Mammary epithelial cell (primary cell): ENCODE measurements at regions of chr1 and their contacts with region 1.

Region 1: DNA sequence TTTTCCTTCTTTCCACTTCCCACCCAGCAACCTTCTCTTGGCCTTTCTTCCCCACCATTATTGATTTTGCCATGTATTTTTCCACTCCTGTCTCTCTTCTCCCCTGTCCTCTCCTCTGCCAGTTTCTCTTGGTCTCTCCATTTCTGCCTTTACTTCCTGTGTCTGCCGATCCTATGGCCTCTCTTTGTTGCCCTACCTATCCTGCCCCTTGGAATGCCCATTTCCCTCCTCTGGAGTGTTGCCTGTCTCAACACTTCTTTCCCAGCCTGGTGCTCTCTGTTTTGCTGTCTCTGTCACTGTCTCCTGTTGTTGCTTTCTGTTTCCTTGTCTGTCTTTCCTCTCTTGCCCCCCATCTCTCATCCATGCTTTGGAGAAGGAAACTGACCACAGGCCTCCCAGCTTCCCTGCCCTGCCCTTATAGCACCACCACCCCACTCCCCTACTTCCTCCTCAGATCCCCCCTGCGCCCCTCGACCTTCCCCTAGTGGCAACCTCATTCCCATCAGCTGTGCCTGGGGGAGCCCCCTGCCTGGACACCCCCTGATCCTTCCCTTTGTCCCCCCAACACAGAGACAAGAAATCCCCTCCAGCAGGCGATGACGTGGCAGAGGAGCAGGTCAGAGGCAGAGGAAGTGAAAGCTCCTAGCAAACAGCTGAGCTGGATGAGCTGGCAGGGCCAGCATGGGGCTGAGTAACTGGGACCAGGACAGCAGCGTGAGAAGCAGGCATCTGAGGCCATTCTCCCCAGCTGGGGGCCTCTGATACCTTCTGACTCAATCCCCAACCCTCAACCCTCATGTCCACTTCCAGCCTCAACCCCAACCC is 6.6 kb upstream of the ETV3L start:
- DNase-seq: peak; percentile 56
- H3K4me3 ChIP-seq: no peak overlapping the region
- H3K27ac ChIP-seq: no peak overlapping the region
- H3K4me1 ChIP-seq: peaks cover 6% of the 10 kb centered on the region
- H3K27me3 ChIP-seq: no peaks in the 10 kb centered on the region
- CTCF ChIP-seq: no peak

Region 2: DNA sequence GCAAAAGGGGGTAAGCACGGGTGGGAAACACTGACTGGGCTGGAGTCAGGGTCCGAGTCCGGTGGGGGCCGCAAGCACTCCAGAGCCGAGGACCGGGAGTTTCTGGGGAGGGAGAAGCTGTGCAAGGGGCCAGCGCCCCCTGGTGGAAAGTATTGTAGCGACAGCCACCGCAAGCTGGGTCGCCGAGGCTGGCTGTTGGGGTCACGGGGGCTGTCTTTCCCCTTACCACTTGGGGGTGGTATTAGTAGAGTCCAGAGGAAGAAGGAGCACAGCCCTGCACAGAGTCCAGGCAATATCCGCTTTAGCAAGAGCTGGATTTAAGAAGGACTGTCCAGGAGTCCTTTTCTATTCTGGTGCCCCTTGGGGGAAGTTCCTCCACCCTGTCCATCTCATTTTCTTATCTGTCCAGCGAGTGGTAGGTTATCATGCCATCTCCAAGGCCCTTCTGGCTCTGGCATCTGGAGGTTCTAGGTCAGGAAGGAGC is 49.9 kb after region 1 on chr1:
- CTCF ChIA-PET with region 1: no interaction called
- dilution Hi-C with region 1: no loop called
- in situ Hi-C with region 1: loop called in 1 of 2 experiments (anchors 5 kb)
- intact Hi-C with region 1: no loop called
- DNase-seq: peak; percentile 27
- H3K4me3 ChIP-seq: no peak overlapping the region
- H3K27ac ChIP-seq: no peak overlapping the region
- H3K4me1 ChIP-seq: peaks cover 39% of the 10 kb centered on the region
- H3K27me3 ChIP-seq: no peaks in the 10 kb centered on the region
- CTCF ChIP-seq: peak; percentile 71 to 94